ENCODE measurements at regions of chrX and their contacts with region 1.

Region 1: GRCh38 chrX:15564981-15565579 is 35.7 kb downstream of the ACE2 start:
- DNase-seq: peak; percentile 45
- H3K4me3 Mint-ChIP-seq: no peak overlapping the region
- H3K27ac Mint-ChIP-seq: no peak overlapping the region
- H3K4me1 Mint-ChIP-seq: no peaks in the 10 kb centered on the region
- H3K27me3 Mint-ChIP-seq: peaks cover 1% of the 10 kb centered on the region

Region 2: GRCh38 chrX:15349046-15349445 is 216.0 kb before region 1 on chrX:
- CTCF ChIA-PET with region 1: interaction called, 5 read pairs
- POLR2A ChIA-PET with region 1: no interaction called
- intact Hi-C with region 1: loop called (anchors 1 kb)
- DNase-seq: no peak
- H3K4me3 Mint-ChIP-seq: no peak overlapping the region
- H3K27ac Mint-ChIP-seq: no peak overlapping the region
- H3K4me1 Mint-ChIP-seq: no peaks in the 10 kb centered on the region
- H3K27me3 Mint-ChIP-seq: peaks cover 1% of the 10 kb centered on the region

Region 3: DNA sequence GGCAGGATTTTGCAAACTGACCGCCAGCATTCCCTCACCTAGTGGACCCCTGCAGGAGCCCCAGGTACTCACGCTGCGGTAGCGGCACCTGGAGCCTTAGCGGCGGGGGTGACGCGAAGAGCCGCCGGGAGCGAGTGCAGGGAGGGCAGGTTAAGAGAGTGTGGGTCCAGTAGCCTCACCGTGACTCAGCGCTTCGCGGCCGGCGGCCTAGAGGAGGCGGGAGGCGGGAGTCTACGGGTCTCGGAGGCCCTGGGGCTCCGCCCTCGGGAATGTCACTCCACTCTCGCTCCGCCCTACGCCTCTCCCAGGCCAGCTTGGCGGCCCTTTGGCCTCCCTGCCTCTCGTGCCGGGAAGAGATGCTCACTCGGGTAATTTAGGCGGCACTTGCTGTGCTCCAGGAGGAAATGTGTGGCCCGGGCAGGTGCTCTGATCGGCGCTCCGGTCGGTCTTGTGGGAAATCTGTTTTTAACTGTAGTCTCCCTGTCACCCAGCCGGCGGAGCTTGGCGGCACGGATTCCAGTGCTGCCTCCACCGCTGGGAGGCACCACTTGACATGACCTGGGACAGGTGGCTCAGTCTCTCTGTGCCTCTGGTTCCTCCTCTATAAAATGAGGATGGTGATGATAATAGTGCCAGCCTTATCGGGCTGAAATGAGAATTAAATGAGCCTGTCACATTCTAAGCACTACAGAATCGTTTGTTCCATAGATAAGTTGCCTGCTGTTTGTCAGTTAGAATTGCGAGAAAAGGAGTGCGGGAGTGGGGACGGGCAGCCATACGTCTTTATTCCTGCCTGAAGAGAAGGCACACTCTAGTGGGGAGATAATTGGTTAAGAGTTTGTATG is 71.7 kb before region 1 on chrX and contains the start of gene PIR:
- CTCF ChIA-PET with region 1: interaction called, 5 read pairs
- POLR2A ChIA-PET with region 1: no interaction called
- intact Hi-C with region 1: loop called (anchors 1 kb)
- DNase-seq: peak; percentile 80
- H3K4me3 Mint-ChIP-seq: peak within 1 kb of the TSS; percentile 79
- H3K27ac Mint-ChIP-seq: peak within 1 kb of the TSS; percentile 31
- H3K4me1 Mint-ChIP-seq: peaks cover 4% of the 10 kb centered on the region
- H3K27me3 Mint-ChIP-seq: no peaks in the 10 kb centered on the region
- total RNA-seq, gene PIR: 2.4 to 3.1 TPM

Region 4: GRCh38 chrX:15524417-15524816 is 40.7 kb before region 1 on chrX:
- CTCF ChIA-PET with region 1: no interaction called
- POLR2A ChIA-PET with region 1: no interaction called
- intact Hi-C with region 1: no loop called
- DNase-seq: no peak
- H3K4me3 Mint-ChIP-seq: no peak overlapping the region
- H3K27ac Mint-ChIP-seq: no peak overlapping the region
- H3K4me1 Mint-ChIP-seq: no peaks in the 10 kb centered on the region
- H3K27me3 Mint-ChIP-seq: no peaks in the 10 kb centered on the region